Heart left ventricle (tissue), 16 donors: ENCODE measurements at regions of chr1 and their contacts with region 1.

Region 1: GRCh38 chr1:160098852-160099561 is 588 bp upstream of the IGSF8 start:
- DNase-seq: peak; percentile 97 to 99 (median 98)
- ATAC-seq: peak; percentile 88 to 93 (median 90)
- H3K4me3 ChIP-seq: peak overlapping the region in 11 of 12 donors; percentile 30 to 99 (median 79)
- H3K27ac ChIP-seq: peak overlapping the region; percentile 68 to 96 (median 93)
- H3K4me1 ChIP-seq: peaks cover 7 to 55% (median 35%) of the 10 kb centered on the region in 12 donors
- H3K27me3 ChIP-seq: no peaks in the 10 kb centered on the region
- CTCF ChIP-seq: no peak
- POLR2A ChIP-seq: peak in 1 of 2 donors; percentile 32

Region 2: GRCh38 chr1:160219062-160219929 is 120.3 kb after region 1 on chr1:
- intact Hi-C with region 1: loop called in 4 of 10 experiments (anchors 1 to 10 kb)
- DNase-seq: peak in 4 of 5 donors; percentile 55 to 67 (median 64)
- ATAC-seq: peak; percentile 52 to 87 (median 82)
- H3K4me3 ChIP-seq: no peak overlapping the region
- H3K27ac ChIP-seq: peak overlapping the region; percentile 17 to 80 (median 56)
- H3K4me1 ChIP-seq: peaks cover 3 to 51% (median 32%) of the 10 kb centered on the region in 12 donors
- H3K27me3 ChIP-seq: no peaks in the 10 kb centered on the region
- CTCF ChIP-seq: peak; percentile 49 to 78 (median 69)
- POLR2A ChIP-seq: no peak

Region 3: DNA sequence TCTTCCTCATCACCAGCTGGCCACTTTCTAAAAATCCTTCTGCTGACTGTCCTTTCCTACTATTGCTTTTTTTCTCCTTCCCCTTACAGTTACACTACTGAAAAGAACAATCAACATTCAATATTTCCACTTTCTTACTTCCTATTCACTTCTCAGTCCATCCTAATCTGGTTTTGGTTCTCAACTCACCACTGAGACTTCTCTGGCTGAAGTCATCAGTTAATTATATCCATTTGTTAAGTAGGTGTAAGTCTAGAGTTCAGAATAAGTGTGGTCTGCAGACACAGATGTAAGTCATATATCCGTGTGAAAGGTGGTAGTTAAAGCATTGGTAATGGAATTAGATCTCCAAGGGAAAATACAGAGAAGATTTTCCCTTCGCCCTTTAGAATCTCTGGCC is 127.6 kb after region 1 on chr1:
- intact Hi-C with region 1: loop called in 2 of 10 experiments (anchors 2 to 10 kb)
- DNase-seq: no peak
- ATAC-seq: peak in 3 of 4 donors; percentile 49 to 57 (median 57)
- H3K4me3 ChIP-seq: no peak overlapping the region
- H3K27ac ChIP-seq: peak overlapping the region in 1 of 12 donors; percentile 15
- H3K4me1 ChIP-seq: peaks cover 0 to 11% (median 0%) of the 10 kb centered on the region in 12 donors
- H3K27me3 ChIP-seq: no peaks in the 10 kb centered on the region
- CTCF ChIP-seq: no peak
- POLR2A ChIP-seq: no peak

Region 4: GRCh38 chr1:160251687-160252526 is 152.9 kb after region 1 on chr1:
- intact Hi-C with region 1: loop called in 8 of 10 experiments (anchors 2 to 10 kb)
- DNase-seq: peak in 4 of 5 donors; percentile 58 to 72 (median 64)
- ATAC-seq: peak; percentile 90 to 95 (median 94)
- H3K4me3 ChIP-seq: no peak overlapping the region
- H3K27ac ChIP-seq: peak overlapping the region in 8 of 12 donors; percentile 15 to 59 (median 41)
- H3K4me1 ChIP-seq: peaks cover 0 to 50% (median 27%) of the 10 kb centered on the region in 12 donors
- H3K27me3 ChIP-seq: no peaks in the 10 kb centered on the region
- CTCF ChIP-seq: peak; percentile 48 to 82 (median 68)
- POLR2A ChIP-seq: no peak

Region 5: DNA sequence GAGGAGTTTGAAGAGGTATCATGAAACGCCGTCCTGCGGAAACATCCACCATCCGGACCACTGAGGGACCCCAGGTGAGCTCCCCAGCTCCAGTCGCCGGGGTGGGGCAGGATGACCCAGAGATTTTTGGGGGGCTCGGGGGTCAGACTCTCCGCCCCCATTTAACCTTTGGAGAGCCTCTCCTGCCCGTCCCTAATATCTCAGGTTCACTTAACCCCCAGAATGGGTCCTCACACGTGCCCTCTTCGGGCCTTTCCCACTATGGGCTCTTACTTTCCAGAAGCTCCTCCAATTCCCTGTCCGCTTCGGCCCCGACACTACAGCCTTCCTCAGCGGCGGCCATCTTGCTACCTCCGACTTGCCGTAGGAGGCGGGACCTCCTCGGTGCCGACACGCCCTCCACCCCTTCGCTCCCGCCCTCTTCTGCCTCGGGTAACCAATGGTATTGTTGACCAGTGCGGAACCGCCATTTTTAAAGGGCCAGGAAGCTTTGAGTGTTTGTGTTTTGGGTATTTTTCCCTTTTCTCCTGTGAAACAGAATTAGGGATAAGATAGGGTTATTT is 185.9 kb after region 1 on chr1 and contains the start of gene PEX19:
- intact Hi-C with region 1: loop called in 5 of 10 experiments (anchors 2 to 5 kb)
- DNase-seq: peak; percentile 95 to 96 (median 95)
- ATAC-seq: peak; percentile 99 to 100 (median 100)
- H3K4me3 ChIP-seq: peak within 1 kb of the TSS; percentile 76 to 98 (median 88)
- H3K27ac ChIP-seq: peak within 1 kb of the TSS; percentile 56 to 92 (median 84)
- H3K4me1 ChIP-seq: peaks cover 0 to 25% (median 18%) of the 10 kb centered on the region in 12 donors
- H3K27me3 ChIP-seq: no peaks in the 10 kb centered on the region
- CTCF ChIP-seq: no peak
- POLR2A ChIP-seq: peak in 1 of 2 donors; percentile 52
- total RNA-seq, gene PEX19: 65.0 to 105 (median 85.7) TPM

Region 6: DNA sequence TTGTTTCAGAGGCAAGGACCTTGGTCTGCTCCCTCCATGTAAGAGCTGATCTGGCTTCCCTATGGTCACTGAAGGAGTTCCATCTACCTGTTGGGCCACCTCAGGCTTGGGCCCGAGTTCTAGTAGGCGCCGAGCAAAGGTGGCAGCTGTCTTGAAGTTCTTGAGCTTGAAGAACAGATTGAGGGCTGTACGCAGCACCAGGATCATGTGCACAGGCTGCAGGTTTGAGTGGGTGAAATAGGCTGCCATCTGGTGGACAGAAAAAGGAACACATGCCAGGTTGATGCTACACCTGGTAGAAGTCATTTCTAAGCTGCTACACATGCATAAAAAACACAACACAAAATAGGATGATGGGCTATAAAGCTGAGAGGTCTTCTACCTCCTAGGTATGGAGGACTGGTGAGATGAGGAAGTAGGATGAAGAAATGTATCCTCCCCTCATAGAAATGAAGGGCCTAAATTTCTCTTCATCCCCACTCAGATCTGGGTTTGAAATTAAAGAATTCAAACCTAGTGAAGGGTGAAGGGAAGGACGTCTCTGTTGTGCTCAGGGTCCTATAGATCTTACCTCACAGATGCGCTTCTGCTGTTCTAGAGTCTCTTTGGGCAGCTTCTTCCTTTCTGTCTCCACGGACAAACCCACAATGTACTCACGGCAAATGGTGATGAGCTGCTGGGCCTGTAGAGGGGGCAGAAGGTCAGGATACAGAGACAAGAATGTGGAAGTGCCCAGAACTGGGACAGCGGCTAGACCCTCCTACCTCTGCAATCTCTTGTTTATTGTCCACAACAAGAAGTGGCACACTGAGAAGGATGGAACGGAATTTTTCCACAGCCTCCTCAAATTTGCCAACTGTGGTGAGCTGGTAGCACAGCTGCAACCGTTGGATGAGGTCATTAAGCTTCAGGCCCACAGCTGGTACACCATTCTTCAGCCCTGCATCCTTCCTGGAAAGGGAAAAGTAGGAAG is 192.5 kb after region 1 on chr1:
- intact Hi-C with region 1: loop called in 6 of 10 experiments (anchors 1 to 5 kb)
- DNase-seq: peak in 4 of 5 donors; percentile 44 to 60 (median 53)
- ATAC-seq: peak; percentile 73 to 90 (median 82)
- H3K4me3 ChIP-seq: no peak overlapping the region
- H3K27ac ChIP-seq: peak overlapping the region in 1 of 12 donors; percentile 32
- H3K4me1 ChIP-seq: peaks cover 0 to 5% (median 0%) of the 10 kb centered on the region in 12 donors
- H3K27me3 ChIP-seq: no peaks in the 10 kb centered on the region
- CTCF ChIP-seq: peak; percentile 62 to 86 (median 78)
- POLR2A ChIP-seq: no peak

Region 7: DNA sequence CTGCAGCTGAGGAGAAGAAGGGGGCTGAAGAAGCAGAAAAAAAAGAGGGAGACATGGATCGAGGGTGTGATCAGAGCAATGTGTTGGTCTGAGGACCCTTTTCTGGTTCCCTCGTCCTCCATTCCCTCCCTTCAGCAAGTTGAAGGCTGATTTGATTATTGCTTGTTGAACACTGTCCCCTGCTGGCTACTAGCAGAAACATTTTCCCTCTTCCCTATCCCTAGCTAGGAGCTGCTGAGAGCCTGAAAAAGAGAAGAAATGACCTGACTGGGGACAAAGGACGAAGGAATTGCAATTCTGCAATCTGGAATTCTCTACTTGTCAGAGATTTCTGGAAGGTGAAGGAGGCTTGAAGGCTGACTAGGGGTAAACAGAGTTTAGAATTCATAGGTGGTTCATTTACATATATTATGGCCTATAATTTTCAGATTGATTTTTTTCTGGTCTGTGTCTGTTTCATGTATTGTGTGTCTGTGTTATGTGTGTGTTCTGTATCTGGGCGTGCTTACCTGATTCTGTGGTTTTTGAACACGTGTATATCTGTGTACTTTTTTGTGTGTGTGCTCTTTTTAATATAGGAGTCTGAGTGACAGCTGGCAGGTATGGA is 277.6 kb after region 1 on chr1:
- intact Hi-C with region 1: loop called in 5 of 10 experiments (anchors 5 to 10 kb)
- DNase-seq: no peak
- ATAC-seq: peak; percentile 56 to 86 (median 80)
- H3K4me3 ChIP-seq: peak overlapping the region in 1 of 12 donors; percentile 20
- H3K27ac ChIP-seq: peak overlapping the region in 4 of 12 donors; percentile 11 to 42 (median 40)
- H3K4me1 ChIP-seq: peaks cover 0 to 23% (median 10%) of the 10 kb centered on the region in 12 donors
- H3K27me3 ChIP-seq: peaks cover 0 to 3% (median 0%) of the 10 kb centered on the region in 9 donors
- CTCF ChIP-seq: peak; percentile 68 to 95 (median 88)
- POLR2A ChIP-seq: no peak